Heart left ventricle (tissue), 16 donors: ENCODE measurements at regions of chr1 and their contacts with region 1.

Region 1: GRCh38 chr1:63073309-63074306 is 248.8 kb upstream of the FOXD3 start:
- DNase-seq: peak in 1 of 5 donors; percentile 25
- ATAC-seq: peak; percentile 37 to 74 (median 45)
- H3K4me3 ChIP-seq: peak overlapping the region in 11 of 12 donors; percentile 15 to 48 (median 37)
- H3K27ac ChIP-seq: no peak overlapping the region
- H3K4me1 ChIP-seq: peaks cover 0 to 5% (median 0%) of the 10 kb centered on the region in 12 donors
- H3K27me3 ChIP-seq: peaks cover 0 to 66% (median 31%) of the 10 kb centered on the region in 9 donors
- CTCF ChIP-seq: peak in 7 of 12 donors; percentile 12 to 49 (median 31)
- POLR2A ChIP-seq: no peak

Region 2: GRCh38 chr1:62832276-62832675 is 241.3 kb before region 1 on chr1:
- intact Hi-C with region 1: no loop called
- DNase-seq: no peak
- ATAC-seq: no peak
- H3K4me3 ChIP-seq: no peak overlapping the region
- H3K27ac ChIP-seq: no peak overlapping the region
- H3K4me1 ChIP-seq: peaks cover 0 to 2% (median 0%) of the 10 kb centered on the region in 12 donors
- H3K27me3 ChIP-seq: no peaks in the 10 kb centered on the region
- CTCF ChIP-seq: no peak
- POLR2A ChIP-seq: no peak

Region 3: GRCh38 chr1:62962901-62963776 is 110.5 kb before region 1 on chr1:
- intact Hi-C with region 1: loop called in 2 of 10 experiments (anchors 5 kb)
- DNase-seq: peak in 4 of 5 donors; percentile 21 to 58 (median 32)
- ATAC-seq: peak in 3 of 4 donors; percentile 59 to 74 (median 72)
- H3K4me3 ChIP-seq: no peak overlapping the region
- H3K27ac ChIP-seq: no peak overlapping the region
- H3K4me1 ChIP-seq: no peaks in the 10 kb centered on the region
- H3K27me3 ChIP-seq: peaks cover 0 to 17% (median 0%) of the 10 kb centered on the region in 9 donors
- CTCF ChIP-seq: peak; percentile 18 to 62 (median 36)
- POLR2A ChIP-seq: no peak

Region 4: DNA sequence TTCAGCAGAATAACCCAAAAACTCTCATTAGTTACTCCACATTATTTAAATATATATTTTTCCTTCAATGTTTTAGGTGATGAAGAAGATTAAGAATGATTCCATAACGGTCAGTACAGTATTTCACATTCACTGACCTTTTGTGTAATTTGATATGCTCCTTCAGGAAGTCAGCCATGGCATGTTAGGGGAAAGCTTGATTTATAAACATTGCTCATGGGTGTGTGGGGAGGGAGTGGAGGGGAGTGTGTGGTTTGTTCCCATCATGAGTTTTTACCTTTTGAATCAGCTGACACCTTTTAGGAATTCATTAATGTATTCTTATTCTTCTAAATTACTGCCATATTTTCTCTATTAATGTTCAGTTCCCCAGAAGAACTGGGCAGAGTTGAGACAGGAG is 49.5 kb before region 1 on chr1:
- intact Hi-C with region 1: no loop called
- DNase-seq: no peak
- ATAC-seq: no peak
- H3K4me3 ChIP-seq: no peak overlapping the region
- H3K27ac ChIP-seq: no peak overlapping the region
- H3K4me1 ChIP-seq: no peaks in the 10 kb centered on the region
- H3K27me3 ChIP-seq: peaks cover 0 to 6% (median 0%) of the 10 kb centered on the region in 9 donors
- CTCF ChIP-seq: no peak
- POLR2A ChIP-seq: no peak